ENCODE measurements at regions of chr7 and their contacts with region 1.

Region 1: DNA sequence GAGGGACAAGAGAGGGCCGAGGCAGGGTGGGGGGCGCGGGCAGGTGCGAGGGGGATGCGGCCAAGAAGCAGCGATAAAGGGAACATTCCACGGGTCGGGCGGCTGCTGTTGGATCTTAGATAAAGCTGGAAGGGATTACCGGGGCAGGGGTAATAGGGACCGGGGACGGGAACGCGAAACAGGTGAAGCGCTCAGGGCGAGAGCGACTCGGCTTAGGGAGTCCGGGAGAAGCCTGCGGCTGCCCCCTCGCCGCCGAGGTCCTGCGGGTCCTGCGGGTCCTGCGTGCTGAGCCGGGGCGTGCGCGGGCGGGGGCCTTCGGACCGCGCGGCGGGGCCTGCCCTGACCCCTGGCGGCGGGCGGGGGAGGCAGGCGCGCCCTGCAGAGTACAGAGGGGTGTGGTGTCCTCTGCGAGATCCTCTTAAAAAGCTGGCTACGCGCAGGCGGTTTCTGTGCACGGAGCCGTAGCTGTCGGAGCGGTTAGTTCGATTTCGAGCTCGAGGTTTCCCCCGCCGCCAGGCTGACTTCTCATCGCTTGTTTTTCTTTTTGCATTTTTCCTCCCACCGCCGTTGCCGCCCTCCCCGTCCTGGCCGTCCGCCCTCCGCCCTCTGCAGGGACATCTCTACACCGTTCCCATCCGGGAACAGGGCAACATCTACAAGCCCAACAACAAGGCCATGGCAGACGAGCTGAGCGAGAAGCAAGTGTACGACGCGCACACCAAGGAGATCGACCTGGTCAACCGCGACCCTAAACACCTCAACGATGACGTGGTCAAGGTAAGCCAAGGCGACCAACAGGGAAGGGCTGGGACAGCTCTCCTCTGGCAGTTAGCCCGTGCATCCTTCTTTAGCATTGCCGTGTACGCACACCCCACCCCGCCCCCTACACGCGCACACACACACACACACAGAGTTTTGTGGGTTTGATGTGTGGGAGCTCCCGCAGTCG is 1.4 kb downstream of the CAV1 start:
- DNase-seq: peak; percentile 80
- H3K4me3 ChIP-seq: peak overlapping the region; percentile 49 to 65 (median 62)
- H3K27ac ChIP-seq: peak overlapping the region; percentile 81 to 92 (median 90)
- H3K4me1 ChIP-seq: peaks cover 0 to 32% (median 19%) of the 10 kb centered on the region in 4 donors
- H3K27me3 ChIP-seq: peaks cover 55% of the 10 kb centered on the region
- CTCF ChIP-seq: peak; percentile 1 to 80 (median 75)
- EP300 ChIP-seq: no peak
- POLR2A ChIP-seq: no peak

Region 2: DNA sequence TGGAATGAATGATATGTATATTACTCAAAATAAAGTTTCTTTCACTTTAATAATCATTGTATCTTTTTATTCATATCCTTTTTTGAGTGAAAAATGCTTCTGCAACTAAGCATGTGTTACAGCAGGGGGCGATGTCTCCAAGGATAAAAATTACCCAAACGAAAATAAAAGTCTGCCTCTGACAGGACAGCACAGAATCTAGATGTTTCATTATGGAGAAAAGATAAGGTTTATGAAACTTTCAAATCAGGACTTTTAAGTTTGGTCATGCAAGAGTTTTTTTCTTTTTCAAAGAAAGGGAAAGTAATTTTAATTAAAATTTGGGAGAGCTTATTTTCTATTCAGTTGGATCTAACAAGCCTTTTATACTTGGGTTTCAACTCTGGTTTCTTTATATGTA is 267.5 kb before region 1 on chr7:
- in situ Hi-C with region 1: loop called in 1 of 4 experiments (anchors 10 kb)
- intact Hi-C with region 1: loop called (anchors 10 kb)
- DNase-seq: no peak
- H3K4me3 ChIP-seq: no peak overlapping the region
- H3K27ac ChIP-seq: peak overlapping the region in 3 of 4 donors; percentile 11 to 50 (median 19)
- H3K4me1 ChIP-seq: peaks cover 0 to 8% (median 4%) of the 10 kb centered on the region in 4 donors
- H3K27me3 ChIP-seq: no peaks in the 10 kb centered on the region
- CTCF ChIP-seq: peak; percentile 76 to 91 (median 82)
- EP300 ChIP-seq: no peak
- POLR2A ChIP-seq: no peak

Region 3: DNA sequence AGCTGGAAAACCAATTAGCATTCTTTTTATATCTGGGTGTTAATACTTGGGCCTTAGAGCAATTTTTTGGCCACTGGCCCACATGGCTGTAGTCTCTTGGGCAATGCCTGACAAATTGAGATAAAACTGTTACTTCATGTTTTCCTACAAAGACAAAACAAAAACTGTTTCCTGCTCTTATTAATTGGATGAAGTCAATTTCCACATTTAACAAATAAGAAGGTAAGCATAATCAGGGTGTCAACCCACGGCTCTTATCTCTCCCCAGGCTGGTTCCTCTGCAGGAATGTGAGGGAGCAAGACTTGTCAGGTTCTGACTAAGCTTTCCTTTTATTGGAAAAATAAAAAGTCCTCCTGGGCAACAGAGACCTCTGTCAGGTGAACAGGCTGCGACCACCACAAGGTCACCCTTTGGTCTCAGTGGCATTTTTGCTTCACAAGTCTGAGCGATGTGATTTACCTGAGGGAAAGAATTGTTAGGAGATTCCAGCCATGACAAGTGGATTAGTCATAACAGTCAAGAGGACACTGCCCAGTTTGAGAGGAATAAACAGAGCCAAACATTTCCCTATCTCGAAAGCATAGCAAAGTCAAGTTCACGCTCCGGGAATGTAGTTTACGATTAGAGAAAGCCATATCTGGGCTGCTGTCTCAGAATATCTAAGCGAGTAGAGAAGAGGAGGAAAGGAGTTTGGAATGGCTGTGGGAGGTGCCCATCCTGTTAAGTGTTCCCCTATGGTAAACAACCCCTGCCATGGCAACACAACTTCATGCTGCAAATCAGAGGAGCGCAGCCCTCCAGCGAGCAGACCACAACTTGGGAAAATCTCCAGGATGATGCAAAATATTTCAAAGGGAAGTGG is 171.4 kb before region 1 on chr7:
- in situ Hi-C with region 1: no loop called
- intact Hi-C with region 1: loop called (anchors 10 kb)
- DNase-seq: peak; percentile 28
- H3K4me3 ChIP-seq: no peak overlapping the region
- H3K27ac ChIP-seq: peak overlapping the region; percentile 76 to 88 (median 82)
- H3K4me1 ChIP-seq: peaks cover 0 to 37% (median 8%) of the 10 kb centered on the region in 4 donors
- H3K27me3 ChIP-seq: no peaks in the 10 kb centered on the region
- CTCF ChIP-seq: no peak
- EP300 ChIP-seq: no peak
- POLR2A ChIP-seq: no peak

Region 4: DNA sequence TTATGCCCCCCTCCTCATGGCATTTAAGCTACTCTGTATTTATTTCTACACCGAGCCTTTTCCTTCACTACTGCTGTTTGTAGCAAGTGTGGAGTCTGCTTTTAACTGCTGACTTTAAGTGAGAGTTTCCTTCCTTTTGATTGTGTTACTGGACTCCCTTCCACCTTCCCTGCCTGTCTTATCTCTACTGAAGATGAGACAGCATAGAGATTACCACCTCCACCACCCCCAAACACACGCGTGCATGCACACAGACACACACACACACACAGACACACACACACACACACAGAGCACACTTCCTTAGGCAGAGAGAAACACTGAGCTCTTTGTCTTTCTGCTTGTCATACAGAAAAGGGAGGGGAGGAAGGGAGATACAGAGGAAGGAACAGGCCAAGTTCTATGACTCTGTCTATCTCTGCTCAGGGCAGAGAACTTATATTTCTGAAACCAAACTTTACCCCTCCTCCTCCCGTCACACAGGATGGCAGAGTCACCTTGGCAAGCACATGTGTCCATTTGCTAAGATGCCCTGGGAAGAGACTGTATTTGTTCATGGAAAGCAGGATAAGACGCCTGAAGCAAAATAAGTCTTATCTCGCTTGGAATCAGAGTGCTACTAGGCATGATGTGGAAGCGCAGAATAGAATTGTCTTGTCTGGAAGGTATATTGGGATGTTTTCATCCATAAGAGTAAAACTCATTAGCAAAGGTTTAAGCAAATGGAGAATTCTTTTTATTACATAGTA is 108.4 kb before region 1 on chr7:
- in situ Hi-C with region 1: no loop called
- intact Hi-C with region 1: no loop called
- DNase-seq: no peak
- H3K4me3 ChIP-seq: no peak overlapping the region
- H3K27ac ChIP-seq: no peak overlapping the region
- H3K4me1 ChIP-seq: peaks cover 0 to 6% (median 0%) of the 10 kb centered on the region in 4 donors
- H3K27me3 ChIP-seq: no peaks in the 10 kb centered on the region
- CTCF ChIP-seq: no peak
- EP300 ChIP-seq: no peak
- POLR2A ChIP-seq: no peak

Measured in transverse colon (tissue), 4 donors.